PC-3 (cell line): ENCODE measurements at regions of chr1 and their contacts with region 1.

Region 1: GRCh38 chr1:213070406-213070805 is 19.4 kb downstream of the RPS6KC1 start:
- DNase-seq: peak; percentile 75
- ATAC-seq: peak; percentile 96
- H3K4me3 ChIP-seq: no peak overlapping the region
- H3K27ac ChIP-seq: no peak overlapping the region
- H3K4me1 ChIP-seq: peaks cover 4% of the 10 kb centered on the region; the same call in 1 of the 2 replicates
- H3K27me3 ChIP-seq: no peaks in the 10 kb centered on the region
- CTCF ChIP-seq: peak; percentile 61

Region 2: DNA sequence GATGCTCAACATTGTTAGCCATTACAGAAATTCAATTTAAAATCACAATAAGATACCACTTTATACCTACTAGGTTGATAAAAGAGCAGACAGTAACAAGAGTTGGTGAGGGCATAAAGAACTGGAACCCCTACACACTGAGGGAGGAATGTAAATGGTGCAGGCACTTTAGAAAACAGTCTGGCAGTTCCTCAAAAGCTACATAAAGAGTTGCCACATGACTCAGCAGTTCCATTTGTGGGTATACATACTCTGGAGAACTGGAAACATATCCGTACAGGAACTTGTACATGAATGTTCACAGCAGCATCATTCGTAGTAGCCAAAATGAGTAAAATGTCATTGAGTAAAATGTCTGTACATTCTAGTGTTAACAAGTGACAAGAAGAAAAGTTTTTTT is 295.8 kb before region 1 on chr1:
- CTCF ChIA-PET with region 1: no interaction called
- POLR2A ChIA-PET with region 1: no interaction called
- intact Hi-C with region 1: no loop called
- DNase-seq: peak; percentile 30
- ATAC-seq: no peak
- H3K4me3 ChIP-seq: no peak overlapping the region
- H3K27ac ChIP-seq: no peak overlapping the region
- H3K4me1 ChIP-seq: no peaks in the 10 kb centered on the region
- H3K27me3 ChIP-seq: no peaks in the 10 kb centered on the region
- CTCF ChIP-seq: no peak

Region 3: GRCh38 chr1:212791676-212792395 is 278.6 kb before region 1 on chr1 and contains the starts of genes NSL1 and TATDN3:
- CTCF ChIA-PET with region 1: no interaction called
- POLR2A ChIA-PET with region 1: no interaction called
- intact Hi-C with region 1: loop called (anchors 5 kb)
- DNase-seq: peak; percentile 99
- ATAC-seq: peak; percentile 92
- H3K4me3 ChIP-seq: peak within 1 kb of the TSS; percentile 87
- H3K27ac ChIP-seq: peak within 1 kb of the TSS; percentile 62
- H3K4me1 ChIP-seq: peaks cover 5% of the 10 kb centered on the region; the same call in 1 of the 2 replicates
- H3K27me3 ChIP-seq: no peaks in the 10 kb centered on the region
- CTCF ChIP-seq: no peak
- total RNA-seq, gene NSL1: 37.3 and 56.1 TPM in 2 replicates
- total RNA-seq, gene TATDN3: 8.8 and 12.7 TPM in 2 replicates

Region 4: GRCh38 chr1:213051127-213051880 is 19.1 kb before region 1 on chr1 and contains the start of gene RPS6KC1:
- CTCF ChIA-PET with region 1: no interaction called
- POLR2A ChIA-PET with region 1: no interaction called
- intact Hi-C with region 1: loop called (anchors 1 kb)
- DNase-seq: peak; percentile 87
- ATAC-seq: peak; percentile 94
- H3K4me3 ChIP-seq: peak within 1 kb of the TSS; percentile 88
- H3K27ac ChIP-seq: peak within 1 kb of the TSS; percentile 68
- H3K4me1 ChIP-seq: peaks cover 38% of the 10 kb centered on the region
- H3K27me3 ChIP-seq: no peaks in the 10 kb centered on the region
- CTCF ChIP-seq: 0 out of 2 replicates have a peak, but pooled peaks have one; percentile 18
- total RNA-seq, gene RPS6KC1: 21.1 and 22.3 TPM in 2 replicates